ENCODE measurements at regions of chr15 and their contacts with region 1.

Region 1: GRCh38 chr15:41557673-41558399 is 1.2 kb upstream of the TYRO3 start:
- DNase-seq: peak; percentile 77
- ATAC-seq: peak; percentile 53
- H3K4me3 ChIP-seq: peak overlapping the region in 2 of 5 experiments; percentile 43 to 65
- H3K4me3 Mint-ChIP-seq: peak overlapping the region; percentile 87
- H3K27ac ChIP-seq: no peak overlapping the region
- H3K27ac Mint-ChIP-seq: no peak overlapping the region
- H3K4me1 ChIP-seq: peaks cover 20 to 25% of the 10 kb centered on the region in 2 donors
- H3K4me1 Mint-ChIP-seq: peaks cover 24% of the 10 kb centered on the region
- H3K27me3 ChIP-seq: peaks cover 0 to 46% (median 15%) of the 10 kb centered on the region in 4 experiments
- H3K27me3 Mint-ChIP-seq: peaks cover 38% of the 10 kb centered on the region
- CTCF ChIP-seq: peak; percentile 89

Region 2: GRCh38 chr15:41199470-41199869 is 358.4 kb before region 1 on chr15:
- CTCF ChIA-PET with region 1: no interaction called
- POLR2A ChIA-PET with region 1: no interaction called
- intact Hi-C with region 1: no loop called
- DNase-seq: no peak
- ATAC-seq: no peak
- H3K4me3 ChIP-seq: no peak overlapping the region
- H3K4me3 Mint-ChIP-seq: no peak overlapping the region
- H3K27ac ChIP-seq: no peak overlapping the region
- H3K27ac Mint-ChIP-seq: no peak overlapping the region
- H3K4me1 ChIP-seq: no peaks in the 10 kb centered on the region
- H3K4me1 Mint-ChIP-seq: no peaks in the 10 kb centered on the region
- H3K27me3 ChIP-seq: no peaks in the 10 kb centered on the region
- H3K27me3 Mint-ChIP-seq: peaks cover 3% of the 10 kb centered on the region
- CTCF ChIP-seq: no peak

Region 3: GRCh38 chr15:41501191-41501917 is 56.5 kb before region 1 on chr15:
- CTCF ChIA-PET with region 1: no interaction called
- POLR2A ChIA-PET with region 1: no interaction called
- intact Hi-C with region 1: loop called (anchors 5 kb)
- DNase-seq: peak; percentile 57
- ATAC-seq: peak; percentile 42
- H3K4me3 ChIP-seq: peak overlapping the region in 4 of 5 experiments; percentile 31 to 62 (median 48)
- H3K4me3 Mint-ChIP-seq: peak overlapping the region; percentile 87
- H3K27ac ChIP-seq: no peak overlapping the region
- H3K27ac Mint-ChIP-seq: peak overlapping the region; percentile 43
- H3K4me1 ChIP-seq: peaks cover 35 to 43% of the 10 kb centered on the region in 2 donors
- H3K4me1 Mint-ChIP-seq: peaks cover 38% of the 10 kb centered on the region
- H3K27me3 ChIP-seq: peaks cover 0 to 66% (median 36%) of the 10 kb centered on the region in 4 experiments
- H3K27me3 Mint-ChIP-seq: peaks cover 43% of the 10 kb centered on the region
- CTCF ChIP-seq: no peak

Region 4: DNA sequence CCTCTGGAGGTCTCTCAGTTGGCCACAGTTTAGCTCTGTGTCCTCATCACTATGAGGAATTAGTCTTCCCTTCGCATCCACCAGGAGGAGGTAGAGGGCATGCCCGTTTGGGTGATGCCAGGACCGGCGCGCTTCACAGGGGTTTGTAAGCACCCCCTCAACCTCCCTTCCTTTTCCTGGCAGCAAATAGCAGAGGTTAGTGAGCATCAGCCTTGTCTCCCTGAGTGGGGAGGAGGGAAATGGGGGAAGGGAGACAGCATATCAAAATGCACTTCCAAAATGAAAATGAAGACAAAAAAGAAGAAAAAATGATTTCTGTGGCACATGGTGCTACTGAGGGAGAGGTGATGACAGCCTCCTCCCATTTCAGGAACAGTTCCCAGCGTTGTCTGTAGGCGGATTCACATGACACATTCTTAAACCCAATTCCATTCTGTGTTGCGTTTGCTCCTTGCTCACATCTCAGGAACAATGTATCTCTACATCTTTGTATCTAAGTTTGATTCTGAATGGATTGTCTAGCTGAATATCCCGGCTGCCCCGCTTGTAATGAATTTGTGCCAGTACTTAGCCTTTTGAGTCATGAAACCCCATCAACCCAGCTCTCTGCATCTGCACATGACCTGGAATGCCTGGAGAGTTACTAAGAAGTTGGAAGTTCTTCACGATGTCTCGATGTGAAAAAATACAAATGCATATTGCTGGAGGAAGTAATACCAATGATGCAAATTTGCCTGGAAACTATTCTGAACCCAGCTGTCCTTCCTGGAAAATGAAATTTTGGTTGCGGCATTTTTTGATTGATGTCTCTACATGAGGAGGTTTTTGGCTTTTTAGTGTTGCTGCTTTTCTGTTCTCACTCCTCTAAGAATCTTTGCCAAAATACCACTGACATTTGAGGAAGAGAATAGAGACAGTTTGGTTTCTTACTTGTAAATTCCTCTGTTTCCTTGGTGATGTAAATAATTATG is 46.4 kb after region 1 on chr15:
- CTCF ChIA-PET with region 1: no interaction called
- POLR2A ChIA-PET with region 1: no interaction called
- intact Hi-C with region 1: loop called (anchors 5 kb)
- DNase-seq: peak; percentile 74
- ATAC-seq: peak; percentile 85
- H3K4me3 ChIP-seq: peak overlapping the region in 3 of 5 experiments; percentile 2 to 31 (median 29)
- H3K4me3 Mint-ChIP-seq: peak overlapping the region; percentile 77
- H3K27ac ChIP-seq: no peak overlapping the region
- H3K27ac Mint-ChIP-seq: no peak overlapping the region
- H3K4me1 ChIP-seq: peaks cover 8 to 10% of the 10 kb centered on the region in 2 donors
- H3K4me1 Mint-ChIP-seq: peaks cover 9% of the 10 kb centered on the region
- H3K27me3 ChIP-seq: peaks cover 0 to 17% (median 5%) of the 10 kb centered on the region in 4 experiments
- H3K27me3 Mint-ChIP-seq: peaks cover 34% of the 10 kb centered on the region
- CTCF ChIP-seq: peak; percentile 80

Region 5: GRCh38 chr15:41621200-41622193 is 63.7 kb after region 1 on chr15:
- CTCF ChIA-PET with region 1: interaction called, 3 read pairs
- POLR2A ChIA-PET with region 1: no interaction called
- intact Hi-C with region 1: loop called (anchors 5 kb)
- DNase-seq: peak; percentile 86
- ATAC-seq: peak; percentile 81
- H3K4me3 ChIP-seq: peak overlapping the region; percentile 40 to 57 (median 49)
- H3K4me3 Mint-ChIP-seq: peak overlapping the region; percentile 86
- H3K27ac ChIP-seq: no peak overlapping the region
- H3K27ac Mint-ChIP-seq: peak overlapping the region; percentile 83
- H3K4me1 ChIP-seq: peaks cover 15 to 17% of the 10 kb centered on the region in 2 donors
- H3K4me1 Mint-ChIP-seq: peaks cover 14% of the 10 kb centered on the region
- H3K27me3 ChIP-seq: no peaks in the 10 kb centered on the region
- H3K27me3 Mint-ChIP-seq: no peaks in the 10 kb centered on the region
- CTCF ChIP-seq: no peak

Region 6: GRCh38 chr15:41698779-41699178 is 140.9 kb after region 1 on chr15:
- CTCF ChIA-PET with region 1: no interaction called
- POLR2A ChIA-PET with region 1: no interaction called
- intact Hi-C with region 1: no loop called
- DNase-seq: no peak
- ATAC-seq: no peak
- H3K4me3 ChIP-seq: no peak overlapping the region
- H3K4me3 Mint-ChIP-seq: no peak overlapping the region
- H3K27ac ChIP-seq: no peak overlapping the region
- H3K27ac Mint-ChIP-seq: no peak overlapping the region
- H3K4me1 ChIP-seq: peaks cover 10 to 14% of the 10 kb centered on the region in 2 donors
- H3K4me1 Mint-ChIP-seq: peaks cover 23% of the 10 kb centered on the region
- H3K27me3 ChIP-seq: no peaks in the 10 kb centered on the region
- H3K27me3 Mint-ChIP-seq: no peaks in the 10 kb centered on the region
- CTCF ChIP-seq: no peak

Region 7: DNA sequence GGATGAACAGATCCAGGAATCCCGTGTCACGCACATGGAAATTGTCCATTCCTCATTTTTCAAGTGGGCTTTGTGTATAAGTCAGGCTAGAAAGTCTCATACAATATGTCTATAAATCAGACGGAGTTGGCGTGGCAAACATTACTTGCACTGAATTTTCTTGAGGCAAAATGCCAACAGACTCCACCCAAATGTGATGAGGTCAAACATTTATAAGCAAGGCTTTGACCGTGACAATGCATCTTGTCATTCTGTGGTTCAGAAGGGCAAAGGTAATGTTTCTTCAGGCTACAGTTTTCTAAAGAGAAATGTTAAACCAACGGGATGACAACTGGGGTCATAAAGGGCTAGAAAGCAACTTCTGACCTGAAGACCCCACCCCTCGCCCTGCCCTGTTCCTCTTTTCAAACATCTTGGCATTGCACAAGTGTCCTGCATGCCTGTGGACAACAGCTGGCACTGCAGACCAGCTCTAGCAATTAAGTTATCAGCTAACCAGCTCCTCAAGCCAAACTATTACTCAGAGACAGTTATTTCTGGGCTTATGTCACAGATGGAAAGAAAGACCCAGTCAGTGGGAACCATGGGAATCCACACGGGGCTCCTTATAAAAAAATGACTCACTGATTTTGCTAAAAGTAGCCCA is 372.5 kb after region 1 on chr15:
- CTCF ChIA-PET with region 1: no interaction called
- POLR2A ChIA-PET with region 1: no interaction called
- intact Hi-C with region 1: no loop called
- DNase-seq: no peak
- ATAC-seq: no peak
- H3K4me3 ChIP-seq: no peak overlapping the region
- H3K4me3 Mint-ChIP-seq: peak overlapping the region; percentile 67
- H3K27ac ChIP-seq: peak overlapping the region; percentile 79 to 89
- H3K27ac Mint-ChIP-seq: peak overlapping the region; percentile 88
- H3K4me1 ChIP-seq: peaks cover 62 to 75% of the 10 kb centered on the region in 2 donors
- H3K4me1 Mint-ChIP-seq: peaks cover 61% of the 10 kb centered on the region
- H3K27me3 ChIP-seq: no peaks in the 10 kb centered on the region
- H3K27me3 Mint-ChIP-seq: no peaks in the 10 kb centered on the region
- CTCF ChIP-seq: no peak